ENCODE measurements at regions of chr6 and their contacts with region 1.

Region 1: GRCh38 chr6:142960098-142960497 is 15.1 kb upstream of the HIVEP2 start:
- DNase-seq: no peak
- ATAC-seq: no peak
- H3K4me3 ChIP-seq: no peak overlapping the region
- H3K27ac ChIP-seq: no peak overlapping the region
- H3K4me1 ChIP-seq: peaks cover 0 to 9% (median 0%) of the 10 kb centered on the region in 9 donors
- H3K27me3 ChIP-seq: no peaks in the 10 kb centered on the region
- CTCF ChIP-seq: no peak

Region 2: DNA sequence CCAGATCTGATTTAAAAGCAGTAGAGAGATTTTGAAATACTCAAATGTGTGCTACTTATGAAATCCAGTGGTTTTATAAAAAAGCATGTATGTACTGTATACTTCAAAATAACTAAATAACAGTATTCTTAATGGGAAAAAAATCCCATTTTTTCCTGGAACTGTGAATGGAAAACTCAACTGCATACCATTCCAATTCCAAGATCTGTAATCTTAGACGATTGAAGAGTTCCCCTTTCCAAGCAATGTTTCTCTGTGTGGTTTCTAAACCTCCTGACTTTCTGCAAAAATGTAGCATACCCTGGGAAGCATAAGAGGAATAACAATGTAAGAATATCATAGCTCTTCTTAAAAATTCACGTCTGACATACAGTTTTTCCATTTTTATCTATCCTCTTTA is 25.2 kb after region 1 on chr6:
- intact Hi-C with region 1: no loop called
- DNase-seq: no peak
- ATAC-seq: no peak
- H3K4me3 ChIP-seq: no peak overlapping the region
- H3K27ac ChIP-seq: no peak overlapping the region
- H3K4me1 ChIP-seq: no peaks in the 10 kb centered on the region
- H3K27me3 ChIP-seq: no peaks in the 10 kb centered on the region
- CTCF ChIP-seq: no peak

Region 3: GRCh38 chr6:143015300-143015706 is 55.2 kb after region 1 on chr6:
- intact Hi-C with region 1: loop called in 4 of 10 experiments (anchors 5 to 10 kb)
- DNase-seq: no peak
- ATAC-seq: no peak
- H3K4me3 ChIP-seq: no peak overlapping the region
- H3K27ac ChIP-seq: no peak overlapping the region
- H3K4me1 ChIP-seq: no peaks in the 10 kb centered on the region
- H3K27me3 ChIP-seq: no peaks in the 10 kb centered on the region
- CTCF ChIP-seq: no peak

Measured in heart right ventricle (tissue), 16 donors.